Calu3 (cell line): ENCODE measurements at regions of chr2 and their contacts with region 1.

Region 1: DNA sequence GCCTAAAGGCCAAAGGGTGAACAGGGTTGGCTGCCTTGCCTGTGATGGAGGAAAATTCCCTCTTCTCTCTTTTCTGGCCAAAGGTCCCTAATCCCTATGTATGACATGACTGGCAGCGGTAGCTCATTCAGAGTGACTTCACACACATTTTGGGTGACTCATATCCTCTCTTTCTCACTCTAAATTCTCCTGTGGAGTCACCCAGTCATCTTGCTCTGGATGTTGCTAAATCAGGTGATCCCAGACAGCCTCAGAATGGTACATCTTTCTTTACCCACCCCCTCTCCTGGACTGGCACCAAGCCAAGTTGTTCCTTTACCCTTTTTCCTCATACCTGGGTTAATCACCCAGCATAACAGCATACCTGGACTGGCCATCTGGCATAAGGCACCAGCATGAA is 77.2 kb downstream of the NEURL3 start:
- DNase-seq: peak; percentile 96
- H3K4me3 Mint-ChIP-seq: peak overlapping the region; percentile 48
- H3K27ac Mint-ChIP-seq: peak overlapping the region; percentile 96
- H3K4me1 Mint-ChIP-seq: peaks cover 44% of the 10 kb centered on the region
- H3K27me3 Mint-ChIP-seq: no peaks in the 10 kb centered on the region
- CTCF ChIP-seq: no peak

Region 2: DNA sequence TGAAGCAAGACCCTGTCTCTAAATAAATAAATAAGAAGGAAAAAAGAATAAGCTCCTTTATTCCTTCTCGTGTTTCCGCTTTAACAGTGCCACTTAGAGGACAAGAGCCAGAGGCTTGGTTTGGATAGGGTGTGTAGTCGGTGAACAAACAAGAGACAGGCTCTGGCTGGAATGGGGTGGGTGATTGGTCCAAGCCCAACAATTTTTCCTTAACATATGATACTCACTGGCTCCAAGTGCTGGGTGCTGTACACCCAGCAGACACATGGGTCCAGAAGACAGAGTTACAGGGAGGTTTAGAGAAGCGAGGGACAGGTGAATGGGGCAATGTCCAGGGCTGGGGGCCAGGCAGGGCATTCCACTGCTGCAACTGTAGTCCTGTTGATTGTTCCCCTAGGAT is 14.6 kb before region 1 on chr2:
- CTCF ChIA-PET with region 1: interaction called, 12 read pairs
- intact Hi-C with region 1: loop called (anchors 2 kb)
- DNase-seq: peak; percentile 67
- H3K4me3 Mint-ChIP-seq: peak overlapping the region; percentile 56
- H3K27ac Mint-ChIP-seq: peak overlapping the region; percentile 90
- H3K4me1 Mint-ChIP-seq: peaks cover 68% of the 10 kb centered on the region
- H3K27me3 Mint-ChIP-seq: no peaks in the 10 kb centered on the region
- CTCF ChIP-seq: no peak